Gastrocnemius medialis (tissue), 4 donors: ENCODE measurements at regions of chr2 and their contacts with region 1.

Region 1: DNA sequence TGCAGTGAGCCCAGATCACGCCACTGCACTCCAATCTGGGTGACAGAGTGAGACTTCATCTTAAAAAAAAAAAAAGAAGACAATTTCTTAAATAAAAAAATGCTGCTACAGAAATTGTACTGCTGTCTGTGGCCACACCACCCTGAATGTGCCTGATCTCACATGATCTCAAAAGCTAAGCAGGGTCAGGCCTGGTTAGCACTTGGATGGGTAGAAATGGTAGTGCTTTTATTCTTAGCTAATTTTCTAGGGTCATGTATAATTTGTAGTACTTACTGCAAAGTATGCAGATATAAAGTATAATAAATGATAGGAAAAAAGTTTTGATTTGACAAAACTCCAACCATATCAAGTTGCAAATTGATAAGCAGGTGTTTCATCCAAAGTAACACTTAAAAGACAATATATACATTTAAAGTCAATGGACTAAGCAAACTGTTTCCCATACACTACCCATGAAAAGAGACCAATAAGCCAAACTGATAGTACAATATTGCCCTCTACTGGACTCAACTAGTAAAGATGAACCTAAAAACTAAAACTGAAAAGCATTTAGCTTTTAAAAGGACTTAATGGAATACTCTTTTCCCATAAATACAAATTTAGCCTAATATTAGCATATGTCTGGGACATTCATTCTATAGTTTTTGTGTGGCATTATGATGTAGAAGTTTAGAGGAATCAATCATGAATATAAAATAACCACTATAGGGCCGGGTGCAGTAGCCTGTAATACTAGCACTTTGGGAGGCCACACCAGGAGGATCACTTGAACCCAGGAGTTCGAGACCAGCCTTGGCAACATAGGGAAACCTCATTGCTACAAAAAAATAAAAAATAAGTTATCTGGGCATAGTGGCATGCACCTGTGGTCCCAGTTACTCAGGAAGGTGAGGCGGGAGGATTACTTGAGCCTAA is 18.6 kb upstream of the PEX13 start:
- DNase-seq: no peak
- ATAC-seq: peak in 1 of 2 donors; percentile 58
- H3K4me3 ChIP-seq: no peak overlapping the region
- H3K27ac ChIP-seq: no peak overlapping the region
- H3K4me1 ChIP-seq: peaks cover 0 to 4% of the 10 kb centered on the region in 2 donors
- H3K27me3 ChIP-seq: no peaks in the 10 kb centered on the region
- CTCF ChIP-seq: peak; percentile 21 to 66 (median 57)
- POLR2A ChIP-seq: no peak

Region 2: DNA sequence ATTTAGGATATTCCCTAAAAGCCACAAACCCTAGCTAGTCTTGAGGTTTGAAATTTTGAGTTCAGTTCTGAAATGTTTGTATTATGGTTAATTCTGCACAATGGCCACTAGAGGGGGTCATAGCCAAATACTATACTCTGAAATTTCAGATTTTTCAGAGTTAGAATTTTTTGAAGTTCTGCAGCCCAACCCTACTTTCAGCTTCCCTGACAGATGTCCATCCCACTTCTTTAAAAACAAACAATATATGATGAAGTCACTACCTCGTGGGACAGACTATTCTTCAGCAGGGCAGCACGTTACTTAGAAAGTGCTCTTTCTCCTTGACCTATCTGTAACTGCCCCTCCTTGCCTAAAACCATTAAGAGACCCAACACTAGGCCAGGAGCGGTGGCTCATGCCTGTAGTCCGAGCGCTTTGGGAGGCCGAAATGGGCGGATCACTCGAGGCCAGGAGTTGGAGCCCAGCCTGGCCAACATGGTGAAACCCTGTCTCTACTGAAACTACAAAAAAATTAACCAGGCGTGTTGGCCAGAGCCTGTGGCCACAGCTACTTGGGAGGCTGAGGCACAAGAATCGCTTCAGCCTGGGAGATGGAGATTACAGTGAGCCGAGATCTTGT is 291.0 kb before region 1 on chr2:
- in situ Hi-C with region 1: loop called (anchors 5 to 10 kb)
- intact Hi-C with region 1: loop called (anchors 1 kb)
- DNase-seq: no peak
- ATAC-seq: peak; percentile 36 to 41
- H3K4me3 ChIP-seq: no peak overlapping the region
- H3K27ac ChIP-seq: no peak overlapping the region
- H3K4me1 ChIP-seq: no peaks in the 10 kb centered on the region
- H3K27me3 ChIP-seq: no peaks in the 10 kb centered on the region
- CTCF ChIP-seq: peak; percentile 52 to 71 (median 61)
- POLR2A ChIP-seq: no peak

Region 3: GRCh38 chr2:60794277-60794863 is 204.5 kb before region 1 on chr2:
- in situ Hi-C with region 1: loop called in 2 of 4 experiments (anchors 10 kb)
- intact Hi-C with region 1: loop called (anchors 10 kb)
- DNase-seq: no peak
- ATAC-seq: no peak
- H3K4me3 ChIP-seq: no peak overlapping the region
- H3K27ac ChIP-seq: no peak overlapping the region
- H3K4me1 ChIP-seq: no peaks in the 10 kb centered on the region
- H3K27me3 ChIP-seq: no peaks in the 10 kb centered on the region
- CTCF ChIP-seq: peak in 2 of 5 experiments; percentile 13 to 27
- POLR2A ChIP-seq: no peak

Region 4: GRCh38 chr2:61460163-61460562 is 461.3 kb after region 1 on chr2:
- in situ Hi-C with region 1: no loop called
- intact Hi-C with region 1: no loop called
- DNase-seq: no peak
- ATAC-seq: peak; percentile 51 to 71
- H3K4me3 ChIP-seq: no peak overlapping the region
- H3K27ac ChIP-seq: peak overlapping the region; percentile 35 to 80 (median 60)
- H3K4me1 ChIP-seq: peaks cover 44 to 58% of the 10 kb centered on the region in 2 donors
- H3K27me3 ChIP-seq: no peaks in the 10 kb centered on the region
- CTCF ChIP-seq: no peak
- POLR2A ChIP-seq: no peak